ENCODE measurements at regions of chr1 and their contacts with region 1.

Region 1: GRCh38 chr1:76154206-76154956 is 79.8 kb downstream of the ST6GALNAC3 start:
- DNase-seq: peak; percentile 65 to 97 (median 82)

Region 2: DNA sequence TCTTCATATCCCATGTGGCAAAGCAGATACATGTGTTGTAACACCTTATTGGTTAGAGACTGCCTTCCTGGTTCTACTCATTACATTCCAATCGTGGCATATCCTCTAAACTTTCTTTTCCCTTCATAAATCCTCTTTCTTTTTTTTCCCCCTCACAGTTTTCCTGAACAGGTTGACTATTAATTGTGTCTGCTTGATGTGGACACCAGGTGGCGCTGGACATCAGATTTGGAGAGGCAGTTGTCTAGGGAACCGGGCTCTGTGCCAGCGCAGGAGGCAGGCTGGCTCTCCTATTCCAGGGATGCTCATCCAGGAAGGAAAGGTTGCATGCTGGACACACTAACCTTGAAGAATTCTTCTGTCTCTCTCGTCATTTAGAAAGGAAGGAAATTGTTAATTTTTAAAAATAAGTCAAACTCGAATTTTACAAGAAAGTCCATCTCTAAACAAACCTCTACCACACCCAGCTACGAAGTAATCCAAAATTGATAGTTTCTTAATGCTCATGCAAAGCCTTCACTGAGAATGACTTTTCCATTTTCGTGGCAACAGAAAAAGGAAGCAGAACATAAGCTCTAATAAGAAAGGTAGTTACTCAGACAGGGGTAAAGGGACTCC is 162.8 kb before region 1 on chr1:
- intact Hi-C with region 1: loop called (anchors 5 kb)
- DNase-seq: peak; percentile 79 to 98 (median 95)

Region 3: GRCh38 chr1:76074321-76075187 is 79.8 kb before region 1 on chr1 and contains the start of gene ST6GALNAC3:
- intact Hi-C with region 1: loop called (anchors 10 kb)
- DNase-seq: peak; percentile 52 to 97 (median 77)

Region 4: DNA sequence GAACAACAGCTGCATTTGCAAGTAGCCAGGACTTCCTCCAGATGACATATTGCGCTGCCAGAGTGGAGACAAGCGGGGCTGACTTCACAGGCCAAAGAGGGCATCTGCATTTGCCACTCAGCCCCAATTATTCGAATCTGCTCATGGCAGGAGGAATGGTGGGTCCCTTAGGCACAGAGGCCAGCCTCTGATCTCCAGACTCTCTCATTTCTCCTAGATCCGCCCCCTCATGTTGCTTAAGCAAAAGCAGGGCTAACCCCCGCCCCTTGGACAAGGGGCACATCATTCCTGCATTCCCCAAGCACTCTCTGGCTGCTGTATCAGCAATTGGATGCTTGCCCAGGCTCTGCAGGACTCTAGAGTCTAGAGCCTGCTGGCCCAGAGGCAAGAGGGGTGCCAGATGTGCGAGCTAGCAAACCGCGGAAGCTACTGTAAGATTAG is 182.6 kb after region 1 on chr1:
- intact Hi-C with region 1: loop called (anchors 5 kb)
- DNase-seq: peak; percentile 27 to 92 (median 52)

Region 5: GRCh38 chr1:77126307-77126706 is 971.9 kb after region 1 on chr1:
- intact Hi-C with region 1: loop called (anchors 1 kb)
- DNase-seq: peak in 2 of 10 donors; percentile 10

Measured in posterior cingulate gyrus (tissue), 11 donors.